GM23248 (cell line): ENCODE measurements at regions of chr4 and their contacts with region 1.

Region 1: DNA sequence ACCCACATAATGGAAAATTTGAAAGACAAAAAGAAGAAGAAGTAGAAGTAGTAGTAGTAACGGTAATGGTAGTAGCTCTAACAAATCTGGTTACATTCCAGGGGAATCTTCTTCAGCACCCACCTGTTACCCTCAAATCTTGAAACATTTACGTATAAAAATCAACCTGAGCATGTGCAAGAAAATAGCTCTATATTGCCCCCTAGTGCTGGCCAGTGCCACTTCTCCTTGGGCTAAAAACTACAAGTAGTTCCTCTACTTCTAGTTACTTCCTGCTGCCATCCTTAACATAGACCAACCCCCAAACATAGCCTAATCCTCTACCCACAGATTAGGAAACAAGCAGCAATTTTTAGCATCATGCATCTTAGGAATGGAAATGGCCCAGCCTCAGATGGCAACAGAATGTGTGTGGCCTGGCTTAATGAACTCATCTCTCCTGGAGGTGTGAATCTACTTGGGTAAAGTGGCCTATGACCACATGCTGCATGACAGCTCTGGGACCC is 3.1 kb downstream of the PDGFC start:
- DNase-seq: peak; percentile 81
- H3K4me3 ChIP-seq: peak overlapping the region; percentile 90
- H3K27ac ChIP-seq: no peak overlapping the region
- H3K4me1 ChIP-seq: peaks cover 35% of the 10 kb centered on the region
- H3K27me3 ChIP-seq: no peaks in the 10 kb centered on the region

Region 2: GRCh38 chr4:156487107-156487506 is 481.4 kb before region 1 on chr4:
- in situ Hi-C with region 1: loop called (anchors 10 kb)
- DNase-seq: no peak
- H3K4me3 ChIP-seq: no peak overlapping the region
- H3K27ac ChIP-seq: no peak overlapping the region
- H3K4me1 ChIP-seq: no peaks in the 10 kb centered on the region
- H3K27me3 ChIP-seq: no peaks in the 10 kb centered on the region

Region 3: DNA sequence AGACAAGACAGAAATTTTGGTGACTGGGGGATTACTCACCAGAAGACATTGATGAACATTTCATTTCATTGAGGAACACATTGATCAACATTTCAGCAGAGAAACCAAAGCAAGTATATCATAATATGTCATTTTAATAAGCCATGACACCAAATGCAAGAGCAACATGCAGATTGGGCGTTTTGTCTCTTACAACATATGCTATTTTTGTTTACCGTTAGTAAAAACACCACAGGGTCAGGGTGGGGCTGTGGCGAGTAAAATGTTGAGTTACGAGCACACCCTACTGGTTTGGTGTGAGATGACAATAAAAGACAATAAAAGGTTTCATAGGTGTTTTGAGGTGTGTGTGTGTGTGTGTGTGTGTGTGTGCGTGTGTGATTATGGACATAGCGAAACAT is 291.4 kb before region 1 on chr4:
- in situ Hi-C with region 1: loop called (anchors 25 kb)
- DNase-seq: peak; percentile 71
- H3K4me3 ChIP-seq: no peak overlapping the region
- H3K27ac ChIP-seq: peak overlapping the region; percentile 7
- H3K4me1 ChIP-seq: peaks cover 41% of the 10 kb centered on the region
- H3K27me3 ChIP-seq: no peaks in the 10 kb centered on the region

Region 4: DNA sequence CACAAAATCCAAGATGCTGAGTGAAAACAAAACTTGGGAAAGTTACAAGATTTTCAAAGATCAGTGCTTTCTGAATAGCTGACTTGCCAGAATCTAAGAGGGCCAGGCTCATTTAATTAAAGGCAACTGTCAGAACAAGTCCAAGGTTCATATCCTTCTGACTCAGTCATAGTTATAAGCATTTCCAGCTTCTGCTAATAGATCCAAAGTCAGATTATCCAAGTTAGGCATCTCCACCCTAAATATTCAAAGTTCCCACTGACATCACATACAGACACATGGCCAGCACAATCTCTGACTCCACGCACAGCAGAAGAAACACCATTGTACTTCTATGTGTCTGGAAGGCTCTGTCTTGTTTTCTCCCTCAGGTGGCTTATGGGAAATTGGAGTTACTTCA is 1162.5 kb after region 1 on chr4:
- in situ Hi-C with region 1: no loop called
- DNase-seq: peak; percentile 76
- H3K4me3 ChIP-seq: peak overlapping the region; percentile 22; the same call in 1 of the 2 replicates
- H3K27ac ChIP-seq: peak overlapping the region; percentile 37
- H3K4me1 ChIP-seq: peaks cover 21% of the 10 kb centered on the region
- H3K27me3 ChIP-seq: no peaks in the 10 kb centered on the region